ENCODE measurements at regions of chr6 and their contacts with region 1.

Region 1: DNA sequence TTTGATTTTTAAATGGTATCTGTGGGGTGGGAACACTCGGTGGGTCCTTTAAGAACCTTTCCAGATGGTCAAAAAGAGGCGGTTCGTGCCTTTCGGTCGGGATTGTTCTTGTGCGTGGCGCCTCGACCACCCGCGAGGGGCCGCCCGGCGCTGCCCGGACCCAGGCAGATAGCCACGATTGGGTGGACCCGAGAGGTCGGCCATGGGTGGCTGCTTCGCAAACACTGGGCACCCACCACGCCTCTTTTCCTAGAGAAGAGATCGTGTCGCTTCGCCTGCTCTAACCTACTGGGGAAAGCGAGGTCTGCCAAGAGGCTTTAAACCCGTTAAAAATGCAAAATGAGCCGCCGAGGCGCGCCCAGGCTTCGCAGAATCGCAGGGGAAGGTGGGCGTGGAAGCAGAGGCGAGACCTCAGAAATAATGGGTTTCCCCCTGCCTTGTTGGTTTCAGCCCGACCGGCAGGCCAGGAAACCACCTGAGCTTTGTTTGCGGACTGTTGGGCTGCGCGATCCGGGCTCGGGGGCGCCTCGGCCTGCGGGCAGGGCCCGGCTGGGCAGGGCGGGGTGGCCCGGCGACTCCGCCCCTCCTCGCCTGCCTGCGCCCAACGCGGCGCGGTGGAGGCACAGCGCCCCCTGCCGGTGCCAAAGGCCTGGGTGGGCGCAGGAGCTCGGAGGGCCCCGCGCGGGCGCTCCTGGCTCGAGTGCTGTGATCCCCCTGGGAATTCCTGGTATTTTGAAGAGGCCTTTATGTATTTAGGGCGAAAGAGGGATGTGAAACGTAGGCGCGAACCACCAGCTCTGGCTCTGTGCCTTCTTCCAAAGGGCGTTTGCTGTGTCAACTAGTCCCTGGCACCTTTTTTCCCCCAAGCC is 1.6 kb downstream of the MARCKS start:
- DNase-seq: peak; percentile 92
- H3K4me3 ChIP-seq: peak overlapping the region; percentile 86
- H3K27ac ChIP-seq: peak overlapping the region; percentile 89
- H3K4me1 ChIP-seq: peaks cover 11% of the 10 kb centered on the region
- H3K27me3 ChIP-seq: no peaks in the 10 kb centered on the region
- CTCF ChIP-seq: peak; percentile 78

Region 2: GRCh38 chr6:112337209-112337638 is 1521.5 kb before region 1 on chr6:
- CTCF ChIA-PET with region 1: no interaction called
- POLR2A ChIA-PET with region 1: no interaction called
- intact Hi-C with region 1: loop called (anchors 5 kb)
- DNase-seq: peak; percentile 90
- H3K4me3 ChIP-seq: no peak overlapping the region
- H3K27ac ChIP-seq: no peak overlapping the region
- H3K4me1 ChIP-seq: peaks cover 16% of the 10 kb centered on the region
- H3K27me3 ChIP-seq: peaks cover 26% of the 10 kb centered on the region
- CTCF ChIP-seq: peak; percentile 89

Region 3: DNA sequence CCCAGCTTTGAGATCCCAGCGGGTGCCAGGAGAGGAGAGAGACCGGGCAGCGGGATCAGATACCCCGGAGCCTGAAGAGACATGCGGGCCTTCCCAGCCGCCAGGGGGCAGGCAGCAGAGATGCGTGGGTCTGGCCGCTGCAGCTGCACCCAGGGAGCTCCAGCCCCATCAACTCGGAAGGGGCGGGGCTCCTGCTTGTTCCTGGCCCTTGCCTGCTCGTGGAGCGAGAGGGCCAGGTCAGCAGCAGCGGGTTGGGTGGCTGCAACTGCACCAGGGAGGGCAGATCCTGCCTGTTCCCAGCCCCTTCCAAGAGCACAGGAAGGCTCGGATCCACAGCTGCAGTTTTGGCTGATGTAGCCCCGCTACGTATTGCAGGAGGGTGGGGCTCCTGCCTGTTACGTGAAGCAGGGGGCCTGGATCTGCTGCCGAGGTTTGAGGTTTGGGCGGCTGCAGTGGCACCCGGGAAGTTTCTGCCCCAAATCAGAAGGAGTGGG is 978.7 kb before region 1 on chr6:
- CTCF ChIA-PET with region 1: no interaction called
- POLR2A ChIA-PET with region 1: no interaction called
- intact Hi-C with region 1: loop called (anchors 5 kb)
- DNase-seq: no peak
- H3K4me3 ChIP-seq: no peak overlapping the region
- H3K27ac ChIP-seq: no peak overlapping the region
- H3K4me1 ChIP-seq: peaks cover 10% of the 10 kb centered on the region
- H3K27me3 ChIP-seq: no peaks in the 10 kb centered on the region
- CTCF ChIP-seq: no peak

Region 4: GRCh38 chr6:113306552-113307145 is 552.1 kb before region 1 on chr6:
- CTCF ChIA-PET with region 1: interaction called, 9 read pairs
- POLR2A ChIA-PET with region 1: no interaction called
- intact Hi-C with region 1: loop called (anchors 2 kb)
- DNase-seq: peak; percentile 36
- H3K4me3 ChIP-seq: no peak overlapping the region
- H3K27ac ChIP-seq: no peak overlapping the region
- H3K4me1 ChIP-seq: no peaks in the 10 kb centered on the region
- H3K27me3 ChIP-seq: no peaks in the 10 kb centered on the region
- CTCF ChIP-seq: peak; percentile 77

Region 5: GRCh38 chr6:113414511-113414910 is 444.2 kb before region 1 on chr6:
- CTCF ChIA-PET with region 1: no interaction called
- POLR2A ChIA-PET with region 1: no interaction called
- intact Hi-C with region 1: loop called (anchors 10 kb)
- DNase-seq: peak; percentile 41
- H3K4me3 ChIP-seq: no peak overlapping the region
- H3K27ac ChIP-seq: no peak overlapping the region
- H3K4me1 ChIP-seq: no peaks in the 10 kb centered on the region
- H3K27me3 ChIP-seq: no peaks in the 10 kb centered on the region
- CTCF ChIP-seq: peak; percentile 44; the same call in 1 of the 2 replicates

Region 6: DNA sequence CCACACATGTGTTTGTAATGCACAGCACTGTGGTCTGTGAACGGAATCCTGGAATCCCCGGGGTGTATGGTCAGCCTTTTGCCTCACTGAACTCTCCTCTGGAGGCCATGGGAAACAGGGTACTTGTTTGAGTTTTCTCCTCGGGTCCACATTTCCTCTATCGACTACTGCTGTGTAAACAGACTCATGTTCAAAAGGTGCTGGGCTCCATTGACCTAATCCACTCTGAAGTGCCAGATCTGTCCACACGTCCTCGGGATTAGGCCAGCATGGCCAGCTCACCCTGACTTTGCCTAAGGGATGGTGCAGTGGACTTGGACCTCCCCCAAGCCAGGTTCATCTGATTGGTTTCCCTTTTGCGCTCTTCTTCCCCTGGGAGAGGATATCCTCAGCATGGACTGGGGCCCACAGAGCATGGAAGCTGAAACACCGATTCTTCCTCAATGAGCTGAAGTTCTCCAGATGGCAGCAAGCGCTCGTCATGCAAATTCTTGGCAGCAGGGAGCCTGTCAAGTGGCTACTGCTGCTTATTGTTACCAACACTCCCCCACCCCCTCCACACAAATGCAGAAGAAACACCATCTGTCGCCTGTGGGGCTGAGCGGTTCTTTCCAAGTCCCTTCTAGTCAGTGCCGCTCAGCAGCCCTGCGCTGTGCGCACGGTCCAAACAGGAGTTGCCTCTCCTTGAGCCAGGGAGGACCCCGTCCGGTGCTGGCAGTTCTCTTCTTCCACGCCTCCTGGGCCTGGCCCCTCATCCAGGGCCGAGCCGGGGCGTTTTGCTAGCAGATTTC is 294.1 kb before region 1 on chr6:
- CTCF ChIA-PET with region 1: no interaction called
- POLR2A ChIA-PET with region 1: no interaction called
- intact Hi-C with region 1: loop called (anchors 5 kb)
- DNase-seq: peak; percentile 94
- H3K4me3 ChIP-seq: peak overlapping the region; percentile 13
- H3K27ac ChIP-seq: no peak overlapping the region
- H3K4me1 ChIP-seq: peaks cover 15% of the 10 kb centered on the region
- H3K27me3 ChIP-seq: no peaks in the 10 kb centered on the region
- CTCF ChIP-seq: 0 out of 2 replicates have a peak, but pooled peaks have one; percentile 20

Region 7: DNA sequence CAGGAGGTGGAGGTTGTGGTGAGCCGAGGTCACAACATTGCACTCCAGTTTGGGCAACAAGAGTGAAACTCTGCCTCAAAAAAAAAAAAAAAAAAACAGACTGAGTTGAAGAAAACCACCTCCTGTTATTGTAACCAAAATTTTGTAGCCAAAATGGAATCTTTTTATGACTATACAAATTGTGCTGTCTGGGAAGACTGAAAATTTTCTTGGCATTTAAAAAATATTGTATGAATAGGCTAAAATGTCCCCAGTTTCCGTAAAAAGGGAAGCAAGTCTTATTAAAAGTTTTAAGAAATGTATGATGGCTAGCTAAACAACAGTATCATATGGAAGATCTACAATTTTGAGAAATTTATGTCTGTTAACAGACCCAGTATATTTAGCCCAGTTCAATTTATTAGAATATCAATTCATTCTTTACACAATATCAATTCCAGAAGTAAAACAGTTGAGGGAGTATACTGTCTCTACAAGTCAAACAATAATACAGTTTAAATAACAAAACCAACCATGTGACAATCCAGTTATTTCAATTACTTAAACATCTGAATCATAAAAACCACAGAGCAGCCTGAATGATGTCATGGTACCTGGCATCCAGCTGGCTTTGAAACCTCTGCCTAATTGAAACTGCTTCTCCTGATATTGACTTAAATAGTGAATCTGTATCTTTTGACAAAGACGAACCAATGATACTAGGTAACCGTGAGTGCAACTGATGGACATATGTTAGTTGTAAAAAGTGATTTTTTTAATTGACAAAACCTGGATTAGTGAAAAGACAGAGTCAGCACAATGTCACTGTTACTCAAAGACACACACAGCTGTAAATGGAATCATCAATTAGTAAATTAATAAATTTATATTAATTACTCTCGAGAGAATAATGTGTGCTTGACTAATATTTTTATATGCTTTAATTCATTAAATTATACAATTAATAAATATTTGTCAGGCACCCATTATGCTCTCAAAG is 168.1 kb before region 1 on chr6:
- CTCF ChIA-PET with region 1: no interaction called
- POLR2A ChIA-PET with region 1: no interaction called
- intact Hi-C with region 1: loop called (anchors 10 kb)
- DNase-seq: no peak
- H3K4me3 ChIP-seq: no peak overlapping the region
- H3K27ac ChIP-seq: no peak overlapping the region
- H3K4me1 ChIP-seq: no peaks in the 10 kb centered on the region
- H3K27me3 ChIP-seq: no peaks in the 10 kb centered on the region
- CTCF ChIP-seq: no peak

Measured in A673 (cell line).